ENCODE measurements at regions of chr18 and their contacts with region 1.

Region 1: GRCh38 chr18:63505566-63506335 is 29.0 kb downstream of the SERPINB5 start:
- DNase-seq: peak; percentile 75
- ATAC-seq: peak; percentile 81
- H3K4me3 ChIP-seq: no peak overlapping the region
- H3K27ac ChIP-seq: no peak overlapping the region
- H3K4me1 ChIP-seq: no peaks in the 10 kb centered on the region
- H3K27me3 ChIP-seq: no peaks in the 10 kb centered on the region
- CTCF ChIP-seq: peak; percentile 89

Region 2: DNA sequence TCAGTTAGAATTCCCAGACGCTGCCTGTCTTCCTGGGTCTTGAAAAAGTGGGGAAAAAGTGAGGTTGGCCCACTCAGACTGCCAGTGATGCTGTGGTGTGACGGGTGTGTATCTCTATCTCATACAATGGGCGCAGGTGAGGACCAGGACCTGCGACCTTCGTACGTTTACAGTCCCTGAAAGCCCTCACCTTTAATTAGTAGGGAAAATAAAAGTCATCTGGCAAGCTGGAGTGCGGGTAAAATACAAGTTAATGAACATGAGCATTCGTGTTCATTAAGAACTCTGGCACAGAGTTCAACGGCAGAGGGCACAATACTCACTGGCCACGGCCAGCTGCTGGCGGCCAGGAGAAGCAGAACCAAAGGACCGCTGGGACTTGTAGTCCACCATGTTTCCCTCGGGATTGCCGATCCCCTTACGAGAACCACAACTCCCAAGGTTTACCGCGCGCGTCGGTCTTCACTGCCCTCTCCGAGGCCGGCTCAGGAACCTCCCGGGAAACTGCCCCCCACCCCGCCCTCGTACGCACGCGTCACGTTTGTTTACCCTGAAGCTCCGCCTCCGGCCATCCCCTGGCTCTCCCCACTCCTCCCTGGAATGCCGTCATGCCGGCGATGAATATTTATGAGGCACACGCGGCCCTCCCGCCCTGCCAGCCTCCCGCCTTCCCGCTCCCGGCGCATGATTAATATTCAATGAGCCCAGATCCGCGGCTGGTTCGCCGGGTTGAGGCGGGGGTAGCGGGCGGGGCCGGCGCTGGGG is 790.9 kb before region 1 on chr18:
- CTCF ChIA-PET with region 1: no interaction called
- POLR2A ChIA-PET with region 1: no interaction called
- intact Hi-C with region 1: no loop called
- DNase-seq: peak; percentile 98
- ATAC-seq: peak; percentile 81
- H3K4me3 ChIP-seq: peak overlapping the region; percentile 73
- H3K27ac ChIP-seq: peak overlapping the region; percentile 43
- H3K4me1 ChIP-seq: peaks cover 34% of the 10 kb centered on the region
- H3K27me3 ChIP-seq: no peaks in the 10 kb centered on the region
- CTCF ChIP-seq: peak; percentile 87

Region 3: DNA sequence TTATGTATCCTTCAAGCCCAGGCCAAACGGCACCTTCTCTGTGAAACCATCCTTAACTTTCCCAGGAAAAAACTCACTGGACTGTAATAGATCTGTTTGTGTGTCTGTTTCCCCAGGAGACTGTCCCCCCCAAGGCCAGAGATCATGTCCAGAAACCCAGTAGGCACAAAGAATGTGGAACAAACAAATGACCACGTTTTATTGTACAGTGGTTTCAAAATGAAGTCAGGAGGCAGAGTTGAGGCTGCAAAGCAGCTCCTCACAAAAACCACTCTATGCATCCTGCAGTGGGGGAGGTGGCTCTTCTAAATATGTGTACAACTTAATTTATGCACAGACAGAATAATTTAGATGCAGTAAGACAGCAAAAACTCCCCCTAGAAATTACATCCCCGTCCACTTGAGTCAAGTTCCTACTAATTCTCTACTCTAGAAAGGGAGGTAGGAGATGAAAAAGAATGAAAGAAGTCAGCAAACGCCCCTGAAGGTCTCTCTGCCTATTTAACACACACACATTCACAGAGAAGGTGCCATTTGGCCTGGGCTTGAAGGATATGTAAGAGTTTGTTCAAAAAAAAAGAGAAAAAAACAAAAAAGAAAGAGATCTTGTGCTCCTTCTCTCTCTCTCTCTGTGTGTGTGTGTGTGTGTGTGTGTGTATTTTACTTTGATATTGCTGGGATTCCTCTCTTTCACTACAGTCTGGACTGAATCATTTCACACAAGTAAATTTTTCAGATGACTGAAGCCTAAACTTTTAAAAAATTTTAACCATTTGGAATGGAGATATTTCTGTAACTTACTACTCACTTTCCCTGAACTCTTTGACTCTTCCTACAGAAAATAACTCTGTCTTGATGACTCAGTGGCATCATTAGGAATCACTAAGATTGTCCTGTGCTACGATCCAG is 205.7 kb before region 1 on chr18:
- CTCF ChIA-PET with region 1: no interaction called
- POLR2A ChIA-PET with region 1: no interaction called
- intact Hi-C with region 1: no loop called
- DNase-seq: no peak
- ATAC-seq: no peak
- H3K4me3 ChIP-seq: no peak overlapping the region
- H3K27ac ChIP-seq: no peak overlapping the region
- H3K4me1 ChIP-seq: no peaks in the 10 kb centered on the region
- H3K27me3 ChIP-seq: no peaks in the 10 kb centered on the region
- CTCF ChIP-seq: no peak

Region 4: GRCh38 chr18:63367053-63367953 is 138.4 kb before region 1 on chr18 and contains the start of gene KDSR:
- CTCF ChIA-PET with region 1: no interaction called
- POLR2A ChIA-PET with region 1: interaction called, 3 read pairs
- intact Hi-C with region 1: loop called (anchors 5 kb)
- DNase-seq: peak; percentile 97
- ATAC-seq: peak; percentile 88
- H3K4me3 ChIP-seq: peak within 1 kb of the TSS; percentile 85
- H3K27ac ChIP-seq: peak within 1 kb of the TSS; percentile 68
- H3K4me1 ChIP-seq: peaks cover 6% of the 10 kb centered on the region
- H3K27me3 ChIP-seq: no peaks in the 10 kb centered on the region
- CTCF ChIP-seq: no peak
- total RNA-seq, gene KDSR: 15.8 and 16.1 TPM in 2 replicates

Region 5: GRCh38 chr18:63562284-63562683 is 56.5 kb after region 1 on chr18:
- CTCF ChIA-PET with region 1: no interaction called
- POLR2A ChIA-PET with region 1: no interaction called
- intact Hi-C with region 1: no loop called
- DNase-seq: no peak
- ATAC-seq: no peak
- H3K4me3 ChIP-seq: no peak overlapping the region
- H3K27ac ChIP-seq: no peak overlapping the region
- H3K4me1 ChIP-seq: no peaks in the 10 kb centered on the region
- H3K27me3 ChIP-seq: no peaks in the 10 kb centered on the region
- CTCF ChIP-seq: no peak